HEK293 (cell line): ENCODE measurements at regions of chr3 and their contacts with region 1.

Region 1: DNA sequence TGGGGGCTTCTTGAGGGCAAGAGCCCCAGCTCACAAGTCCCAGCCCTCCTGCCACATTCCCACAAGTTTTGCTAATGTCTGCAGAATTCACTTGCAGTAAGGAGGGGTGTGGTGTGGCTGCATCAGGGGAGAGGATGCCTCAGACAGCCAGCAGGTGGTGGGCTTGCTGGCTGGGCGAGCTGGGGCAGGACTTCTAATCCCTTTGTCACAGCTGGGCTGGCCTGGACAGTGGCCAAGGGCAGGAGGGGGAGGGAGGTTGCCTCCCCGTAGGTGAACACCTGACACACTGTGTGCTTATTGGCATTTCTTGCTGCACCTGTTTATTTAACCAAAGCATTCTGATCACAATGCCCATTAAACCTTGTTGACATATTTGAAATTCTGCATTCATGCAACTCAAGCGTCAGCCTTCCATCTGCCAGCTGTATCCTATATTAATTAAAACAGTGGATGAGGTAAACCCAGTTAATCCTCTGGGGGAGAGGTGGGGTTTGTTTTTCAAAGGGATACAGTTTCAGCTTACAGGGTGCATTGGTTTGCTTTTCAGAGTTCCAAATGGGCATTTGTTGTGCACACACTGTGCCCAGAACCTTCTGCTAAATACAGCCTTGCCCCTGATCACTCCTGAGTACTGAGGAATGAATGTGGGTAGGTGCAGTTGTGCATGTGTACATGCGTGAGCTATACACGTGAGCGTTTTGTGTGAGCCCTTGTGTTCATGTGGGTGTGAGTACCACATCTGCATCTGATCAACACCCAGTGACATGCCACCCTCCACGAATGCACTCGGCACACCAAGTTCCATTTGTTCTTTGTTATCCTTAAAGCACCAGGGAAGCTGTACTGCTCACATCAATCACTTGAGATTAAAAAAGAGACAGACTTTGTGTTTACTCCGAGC is 268.7 kb downstream of the XXYLT1 start:
- H3K4me3 ChIP-seq: no peak overlapping the region
- H3K27ac ChIP-seq: peak overlapping the region; percentile 4
- H3K4me1 ChIP-seq: peaks cover 6% of the 10 kb centered on the region
- CTCF ChIP-seq: peak; percentile 72; the same call in 1 of the 2 replicates

Region 2: DNA sequence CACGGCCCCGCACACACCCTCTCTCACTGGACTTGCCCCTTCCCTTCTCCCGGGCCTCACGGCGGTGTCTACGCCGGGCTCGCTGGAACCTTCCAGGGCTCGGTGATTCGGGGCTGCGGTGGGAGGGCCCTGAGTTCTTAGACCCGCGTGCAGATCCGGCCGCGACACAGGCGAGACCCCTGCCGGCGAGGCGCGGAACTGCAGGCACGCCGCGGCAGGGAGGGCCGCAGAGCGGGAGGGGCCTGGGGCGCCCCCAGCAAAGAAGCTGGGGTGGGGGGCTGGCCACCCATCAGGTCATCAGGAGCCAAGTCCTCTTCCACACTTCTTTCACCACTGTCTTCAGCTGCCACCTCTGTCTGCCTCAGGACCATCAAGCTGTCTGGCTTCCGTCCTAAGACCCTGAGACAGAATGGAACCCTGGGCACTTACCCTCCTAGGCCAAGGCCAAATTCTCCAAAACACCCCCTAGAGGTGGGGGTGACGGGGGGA is 104.3 kb after region 1 on chr3:
- CTCF ChIA-PET with region 1: interaction called, 16 read pairs
- POLR2A ChIA-PET with region 1: interaction called, 3 read pairs
- H3K4me3 ChIP-seq: no peak overlapping the region
- H3K27ac ChIP-seq: no peak overlapping the region
- H3K4me1 ChIP-seq: peaks cover 10% of the 10 kb centered on the region; the same call in 1 of the 2 replicates
- CTCF ChIP-seq: peak; percentile 80